ENCODE measurements at regions of chr3 and their contacts with region 1.

Region 1: DNA sequence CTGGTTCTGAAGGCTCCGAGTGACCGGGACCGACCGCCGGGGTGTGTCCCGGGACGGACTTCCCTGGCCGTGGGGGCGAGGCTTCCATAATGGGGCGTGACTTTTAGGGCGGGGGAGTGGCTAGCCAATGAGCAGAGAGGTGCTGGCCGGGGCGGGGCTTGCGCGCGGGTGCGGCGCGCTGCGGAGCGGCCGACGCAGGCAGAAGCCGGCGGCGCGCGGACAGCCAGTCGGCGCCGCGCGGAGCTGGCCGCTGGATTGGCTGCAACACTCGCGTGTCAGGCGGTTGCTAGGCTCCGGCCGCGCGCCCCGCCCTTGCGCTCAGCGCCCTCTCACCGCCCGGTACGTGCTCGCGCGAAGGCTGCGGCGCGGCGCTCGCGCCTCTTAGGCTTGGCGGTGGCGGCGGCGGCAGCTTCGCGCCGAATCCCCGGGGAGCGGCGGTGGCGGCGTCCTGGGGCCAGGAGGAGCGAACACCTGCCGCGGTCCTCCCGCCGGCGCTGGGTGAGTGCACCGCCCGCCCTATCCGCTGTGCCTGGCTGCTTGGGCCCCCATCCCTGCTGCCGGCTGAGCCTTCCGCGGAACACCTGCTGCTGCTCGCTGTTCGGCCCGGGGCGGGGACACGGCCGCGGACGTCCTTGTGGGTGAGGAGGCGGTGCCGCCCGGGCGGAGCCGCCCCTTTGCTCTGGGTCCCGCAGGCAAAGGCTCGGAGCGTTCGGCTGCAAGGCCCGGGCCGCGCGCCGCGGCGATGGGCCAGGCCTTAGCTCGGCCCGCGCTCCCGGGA is at the start of gene DAG1:
- DNase-seq: peak; percentile 98
- ATAC-seq: peak; percentile 92
- H3K4me3 Mint-ChIP-seq: peak within 1 kb of the TSS; percentile 81
- H3K27ac Mint-ChIP-seq: peak within 1 kb of the TSS; percentile 92
- H3K4me1 Mint-ChIP-seq: peaks cover 20% of the 10 kb centered on the region
- H3K27me3 Mint-ChIP-seq: no peaks in the 10 kb centered on the region
- total RNA-seq, gene DAG1: 9.0 to 9.2 TPM

Region 2: GRCh38 chr3:48663415-48664312 is 806.5 kb before region 1 on chr3:
- CTCF ChIA-PET with region 1: no interaction called
- POLR2A ChIA-PET with region 1: no interaction called
- intact Hi-C with region 1: loop called in 1 of 2 experiments (anchors 5 kb)
- DNase-seq: peak; percentile 96
- ATAC-seq: peak; percentile 91
- H3K4me3 Mint-ChIP-seq: peak overlapping the region; percentile 81
- H3K27ac Mint-ChIP-seq: peak overlapping the region; percentile 93
- H3K4me1 Mint-ChIP-seq: peaks cover 16% of the 10 kb centered on the region
- H3K27me3 Mint-ChIP-seq: peaks cover 28% of the 10 kb centered on the region

Region 3: DNA sequence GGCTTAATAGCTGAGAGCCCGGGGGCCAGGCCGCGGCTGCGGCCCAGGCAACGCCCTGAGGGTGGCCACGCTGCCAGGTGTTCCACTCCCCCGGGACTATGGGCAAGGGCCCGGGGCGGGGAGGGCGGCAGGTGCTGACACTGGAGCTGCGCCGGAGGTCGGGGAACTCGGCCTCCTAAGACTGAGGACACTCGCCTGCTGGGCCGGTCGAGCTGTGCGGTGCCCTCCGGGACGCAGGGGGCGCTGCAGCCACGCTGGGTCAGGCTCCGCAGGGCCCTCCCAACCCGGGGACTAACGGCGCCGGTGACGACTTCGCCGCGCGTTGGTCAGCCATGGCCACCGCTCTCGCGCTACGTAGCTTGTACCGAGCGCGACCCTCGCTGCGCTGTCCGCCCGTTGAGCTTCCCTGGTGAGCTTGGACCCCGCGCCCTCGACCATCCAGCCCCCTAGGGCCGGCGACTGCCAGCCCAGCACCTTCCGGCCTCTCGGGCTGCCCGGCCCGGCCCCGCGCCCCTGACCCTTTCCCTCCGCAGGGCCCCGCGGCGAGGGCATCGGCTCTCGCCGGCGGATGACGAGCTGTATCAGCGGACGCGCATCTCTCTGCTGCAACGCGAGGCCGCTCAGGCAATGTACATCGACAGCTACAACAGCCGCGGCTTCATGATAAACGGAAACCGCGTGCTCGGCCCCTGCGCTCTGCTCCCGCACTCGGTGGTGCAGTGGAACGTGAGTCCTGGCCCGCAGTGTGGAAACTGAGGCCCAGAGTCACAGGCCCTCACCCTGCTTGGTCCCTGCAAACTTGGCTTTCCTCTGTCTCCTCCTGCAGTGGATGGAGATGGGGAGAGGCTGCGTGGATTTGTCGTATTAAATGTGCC is 448.1 kb before region 1 on chr3 and contains the start of gene NDUFAF3:
- CTCF ChIA-PET with region 1: interaction called, 3 read pairs
- POLR2A ChIA-PET with region 1: no interaction called
- intact Hi-C with region 1: loop called in 1 of 2 experiments (anchors 1 kb)
- DNase-seq: peak; percentile 96
- ATAC-seq: peak; percentile 78
- H3K4me3 Mint-ChIP-seq: peak within 1 kb of the TSS; percentile 95
- H3K27ac Mint-ChIP-seq: peak within 1 kb of the TSS; percentile 96
- H3K4me1 Mint-ChIP-seq: peaks cover 60% of the 10 kb centered on the region
- H3K27me3 Mint-ChIP-seq: no peaks in the 10 kb centered on the region
- total RNA-seq, gene NDUFAF3: 90.8 to 108 TPM

Region 4: GRCh38 chr3:49165771-49166751 is 304.1 kb before region 1 on chr3 and contains the start of gene CCDC71:
- CTCF ChIA-PET with region 1: interaction called, 3 read pairs
- POLR2A ChIA-PET with region 1: interaction called, 3 read pairs
- intact Hi-C with region 1: loop called in 1 of 2 experiments (anchors 1 kb)
- DNase-seq: peak; percentile 88
- ATAC-seq: peak; percentile 81
- H3K4me3 Mint-ChIP-seq: peak within 1 kb of the TSS; percentile 90
- H3K27ac Mint-ChIP-seq: peak within 1 kb of the TSS; percentile 89
- H3K4me1 Mint-ChIP-seq: peaks cover 39% of the 10 kb centered on the region
- H3K27me3 Mint-ChIP-seq: no peaks in the 10 kb centered on the region
- total RNA-seq, gene CCDC71: 19.5 to 22.2 TPM

Region 5: GRCh38 chr3:49539659-49540560 is 69.8 kb after region 1 on chr3:
- CTCF ChIA-PET with region 1: interaction called, 5 read pairs
- POLR2A ChIA-PET with region 1: interaction called, 9 read pairs
- intact Hi-C with region 1: loop called in 1 of 2 experiments (anchors 1 kb)
- DNase-seq: peak; percentile 96
- ATAC-seq: peak; percentile 96
- H3K4me3 Mint-ChIP-seq: peak overlapping the region; percentile 62
- H3K27ac Mint-ChIP-seq: no peak overlapping the region
- H3K4me1 Mint-ChIP-seq: no peaks in the 10 kb centered on the region
- H3K27me3 Mint-ChIP-seq: no peaks in the 10 kb centered on the region

Region 6: DNA sequence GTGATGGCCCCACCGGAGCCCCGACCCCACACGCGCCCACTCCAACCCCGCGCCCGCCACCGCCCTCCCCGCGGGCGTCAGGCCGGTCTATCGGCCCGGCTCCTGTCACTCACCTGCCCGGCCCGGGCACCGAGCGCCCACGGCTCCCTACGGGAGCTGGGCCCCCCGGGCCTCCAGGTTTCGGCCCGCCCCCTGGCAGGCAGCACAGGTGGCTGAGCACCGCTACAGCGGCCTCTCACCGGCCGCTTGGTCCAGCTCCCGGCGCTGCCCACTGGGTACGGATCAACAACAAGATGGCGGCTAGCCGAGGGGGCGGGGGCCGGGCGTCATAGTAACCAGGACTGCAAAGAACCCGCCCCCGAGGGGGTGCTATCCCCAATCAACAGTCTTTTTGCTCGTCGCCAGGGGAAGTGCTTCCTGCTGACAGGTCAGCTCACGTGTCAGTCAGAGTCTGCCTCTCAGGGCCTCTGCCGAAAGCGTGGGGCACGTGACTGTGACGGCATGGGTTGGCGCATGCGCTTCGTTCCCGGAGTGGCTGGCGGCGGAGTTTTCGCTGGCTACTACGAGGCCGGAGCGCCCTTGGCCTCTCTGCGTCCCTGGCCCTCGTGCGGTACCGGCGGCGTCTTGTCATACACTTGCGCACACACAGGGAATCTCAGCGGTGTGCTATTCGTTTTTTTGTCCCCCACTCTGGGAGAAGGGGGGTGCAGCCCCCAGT is 316.3 kb after region 1 on chr3 and contains the start of gene IP6K1:
- CTCF ChIA-PET with region 1: no interaction called
- POLR2A ChIA-PET with region 1: no interaction called
- intact Hi-C with region 1: loop called in 1 of 2 experiments (anchors 1 kb)
- DNase-seq: peak; percentile 100
- ATAC-seq: peak; percentile 100
- H3K4me3 Mint-ChIP-seq: peak within 1 kb of the TSS; percentile 90
- H3K27ac Mint-ChIP-seq: peak within 1 kb of the TSS; percentile 96
- H3K4me1 Mint-ChIP-seq: peaks cover 37% of the 10 kb centered on the region
- H3K27me3 Mint-ChIP-seq: no peaks in the 10 kb centered on the region
- total RNA-seq, gene IP6K1: 29.1 to 31.0 TPM

Measured in activated CD4-positive, alpha-beta T cell treated with anti-CD3 and anti-CD28 coated beads for 36 hours (primary cell).